Posterior cingulate gyrus (tissue), 11 donors: ENCODE measurements at regions of chr2 and their contacts with region 1.

Region 1: DNA sequence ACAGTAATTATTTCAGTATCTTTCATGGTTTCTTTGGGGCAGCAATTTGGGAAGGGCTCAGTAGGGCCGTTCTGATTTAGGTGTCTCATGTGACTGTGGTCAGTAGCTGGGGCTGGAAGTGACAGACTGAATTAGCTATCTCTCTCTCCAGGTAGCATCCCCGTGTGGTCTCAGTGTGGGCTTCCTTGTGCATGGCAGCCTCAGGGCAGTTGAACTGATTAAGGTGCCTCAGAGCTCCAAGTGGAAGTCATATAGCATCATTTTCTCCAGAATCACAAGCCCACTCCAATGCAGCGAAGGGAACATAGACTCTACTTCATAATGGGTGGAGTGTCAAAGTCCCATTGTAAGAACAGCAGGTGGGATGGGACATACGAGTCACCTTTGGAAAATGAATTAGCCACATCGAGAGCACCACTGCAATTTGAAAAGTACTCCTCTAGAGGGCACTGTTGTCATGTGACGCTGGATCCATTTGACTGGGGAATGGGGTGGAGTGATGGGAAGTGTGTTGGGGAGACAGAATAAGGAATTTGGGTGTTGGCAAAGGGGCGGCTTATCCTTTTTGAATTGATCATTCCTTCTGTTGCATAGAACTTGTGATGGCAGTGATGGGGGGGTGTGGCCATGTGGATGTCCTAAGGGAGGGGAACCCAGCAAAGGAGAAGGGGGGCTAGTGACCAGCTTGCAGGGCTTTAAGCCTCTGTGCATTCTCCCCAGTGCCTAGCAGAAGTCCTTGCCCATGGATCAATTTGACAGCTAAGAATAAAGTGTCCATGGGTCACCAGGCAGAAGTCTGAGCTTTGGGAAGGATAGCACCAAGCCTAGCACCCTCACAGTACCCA is 39.3 kb upstream of the FAM136A start:
- DNase-seq: peak in 4 of 10 donors; percentile 10 to 40 (median 33)

Region 2: DNA sequence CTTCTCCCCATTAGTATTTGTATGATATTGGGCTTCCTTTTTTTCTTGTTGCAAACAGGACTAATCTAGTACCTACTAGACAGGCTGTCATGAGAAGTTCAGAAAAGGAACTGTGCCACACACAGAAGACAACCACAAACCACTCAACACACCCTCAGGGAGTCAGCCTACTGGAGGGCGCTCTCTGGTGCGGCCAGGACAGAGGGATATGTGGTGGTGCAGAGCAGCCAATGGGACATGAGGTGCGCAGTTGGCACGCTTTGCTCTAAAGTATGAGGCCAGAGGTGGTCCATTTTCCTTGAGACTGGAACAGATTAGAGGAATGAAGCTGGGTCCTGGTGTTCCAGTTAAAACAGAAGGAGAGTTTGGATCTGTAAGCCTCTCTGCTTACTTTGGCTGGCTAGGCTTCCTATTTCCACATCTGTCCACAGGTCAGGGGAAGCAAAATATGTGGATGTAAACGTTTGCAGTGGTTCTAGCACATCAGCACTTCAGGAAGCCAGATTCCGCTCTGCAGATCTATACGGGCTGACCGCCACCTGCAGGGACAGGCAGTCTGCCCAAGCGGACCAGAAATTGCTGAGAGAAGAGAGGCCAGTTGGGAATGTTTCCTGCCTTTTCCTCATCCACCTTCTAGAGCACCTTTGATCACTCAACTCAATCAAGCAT is 1068.2 kb before region 1 on chr2:
- intact Hi-C with region 1: no loop called
- DNase-seq: no peak

Region 3: DNA sequence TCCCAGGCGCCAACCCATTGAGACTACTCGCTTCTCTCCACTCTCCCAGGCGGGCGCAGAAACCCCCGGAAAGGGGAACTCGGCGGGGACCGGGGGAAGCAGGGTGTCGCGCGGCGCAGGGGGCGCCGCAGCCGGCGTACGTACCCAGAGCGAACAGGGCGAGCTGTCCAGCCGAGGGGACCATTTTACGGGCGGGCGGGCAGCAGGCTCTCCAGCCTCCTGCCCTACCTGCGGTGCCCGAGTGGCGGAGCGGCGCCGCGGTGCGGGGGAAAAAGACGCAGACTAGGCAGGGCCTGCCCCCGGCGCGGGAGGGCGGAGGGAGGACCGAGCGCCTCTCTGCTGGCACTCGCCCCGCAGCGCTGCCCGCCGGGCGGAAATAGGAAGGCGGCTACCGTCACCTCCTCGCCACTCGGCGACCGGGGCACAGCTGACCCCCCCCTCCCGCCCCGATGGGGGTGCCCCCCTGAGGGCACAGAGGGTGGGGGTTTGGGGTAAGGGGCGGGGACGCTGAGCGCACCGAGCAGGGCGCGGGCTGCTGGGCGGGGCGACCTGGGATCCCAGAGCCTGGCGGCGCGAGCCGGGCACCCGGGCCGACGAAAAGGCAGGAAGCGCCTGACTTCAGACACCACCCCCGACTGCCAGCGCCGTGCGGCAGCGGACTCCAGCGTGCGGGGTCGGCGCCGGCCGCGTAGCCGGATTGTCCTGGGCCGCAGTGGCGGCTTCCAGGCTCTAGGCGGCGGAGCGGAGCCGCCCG is 212.6 kb after region 1 on chr2 and contains the start of gene TGFA:
- intact Hi-C with region 1: loop called (anchors 5 kb)
- DNase-seq: peak; percentile 60 to 97 (median 76)

Region 4: GRCh38 chr2:70616168-70616694 is 275.1 kb after region 1 on chr2:
- intact Hi-C with region 1: loop called (anchors 1 kb)
- DNase-seq: no peak

Region 5: GRCh38 chr2:70647873-70648481 is 306.8 kb after region 1 on chr2:
- intact Hi-C with region 1: loop called (anchors 10 kb)
- DNase-seq: peak; percentile 37 to 94 (median 76)